Activated CD4-positive, alpha-beta memory T cell treated with anti-CD3 and anti-CD28 coated beads for 36 hours (primary cell): ENCODE measurements at regions of chr3 and their contacts with region 1.

Region 1: GRCh38 chr3:49411968-49412631 is at the starts of genes RHOA and TCTA:
- DNase-seq: peak; percentile 99
- H3K4me3 Mint-ChIP-seq: peak within 1 kb of the TSS; percentile 90
- H3K27ac Mint-ChIP-seq: peak within 1 kb of the TSS; percentile 95
- H3K4me1 Mint-ChIP-seq: peaks cover 63% of the 10 kb centered on the region
- H3K27me3 Mint-ChIP-seq: no peaks in the 10 kb centered on the region
- total RNA-seq, gene RHOA: 497 to 514 TPM
- total RNA-seq, gene TCTA: 9.5 to 10.9 TPM

Region 2: DNA sequence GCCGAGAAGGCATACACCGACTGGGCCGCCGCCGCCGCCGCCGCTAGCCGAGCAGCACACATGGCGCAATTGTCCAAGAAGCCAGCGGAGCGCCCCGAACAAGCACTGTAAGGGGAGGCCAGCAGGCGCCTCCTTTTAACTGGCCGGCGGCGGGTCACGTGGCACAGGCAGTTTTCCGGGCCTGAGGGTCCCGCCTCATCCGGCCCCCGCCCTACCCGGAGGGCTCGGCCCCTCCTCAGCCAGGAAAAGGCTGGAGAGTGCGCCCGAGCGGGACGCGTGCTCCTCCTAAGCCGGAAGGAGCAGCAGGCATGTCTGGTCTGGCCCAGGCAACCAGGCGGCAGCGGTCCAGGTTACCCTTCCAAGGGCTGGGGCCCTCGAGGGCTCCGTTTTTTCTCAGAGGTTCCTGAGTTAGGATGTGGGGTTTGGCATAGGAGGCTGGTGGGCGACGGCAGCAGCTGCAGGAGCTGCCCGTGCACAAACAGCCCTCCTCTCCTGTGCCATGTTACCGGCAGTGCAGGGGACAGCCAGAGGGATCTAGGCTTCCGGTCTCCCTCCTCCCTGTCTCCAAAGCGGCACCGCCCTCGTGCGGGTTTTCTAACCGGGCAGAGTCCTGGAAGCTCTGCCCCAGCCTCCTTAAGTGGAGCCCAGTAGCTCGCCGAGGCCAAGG is 53.8 kb before region 1 on chr3 and contains the start of gene GPX1:
- CTCF ChIA-PET with region 1: no interaction called
- POLR2A ChIA-PET with region 1: interaction called, 14 read pairs
- intact Hi-C with region 1: loop called (anchors 1 kb)
- DNase-seq: peak; percentile 92
- H3K4me3 Mint-ChIP-seq: peak within 1 kb of the TSS; percentile 95
- H3K27ac Mint-ChIP-seq: peak within 1 kb of the TSS; percentile 92
- H3K4me1 Mint-ChIP-seq: peaks cover 22% of the 10 kb centered on the region
- H3K27me3 Mint-ChIP-seq: no peaks in the 10 kb centered on the region
- total RNA-seq, gene GPX1: 176 to 177 TPM

Region 3: DNA sequence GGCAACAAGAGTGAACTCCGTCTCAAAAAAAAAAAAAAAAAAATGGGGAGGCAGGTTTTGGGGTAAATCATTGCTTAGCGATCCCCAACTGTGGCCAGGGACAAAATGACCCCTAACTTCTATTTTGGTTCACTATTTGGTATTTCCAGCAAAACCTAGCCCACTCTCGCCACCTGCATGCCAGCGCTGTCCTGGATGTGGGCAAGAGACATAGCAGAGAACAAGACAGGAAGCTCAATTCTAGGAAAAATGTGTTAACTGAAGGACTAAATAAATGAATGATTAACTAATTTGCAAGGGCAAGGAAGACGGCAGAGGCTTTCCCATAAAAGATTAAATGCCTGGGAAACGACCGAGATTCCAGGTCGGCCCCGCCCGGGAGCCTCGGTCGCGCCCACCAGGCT is 16.6 kb after region 1 on chr3:
- CTCF ChIA-PET with region 1: interaction called, 9 read pairs
- POLR2A ChIA-PET with region 1: interaction called, 11 read pairs
- intact Hi-C with region 1: loop called (anchors 1 kb)
- DNase-seq: no peak
- H3K4me3 Mint-ChIP-seq: peak overlapping the region; percentile 77
- H3K27ac Mint-ChIP-seq: peak overlapping the region; percentile 73
- H3K4me1 Mint-ChIP-seq: peaks cover 14% of the 10 kb centered on the region
- H3K27me3 Mint-ChIP-seq: no peaks in the 10 kb centered on the region

Region 4: DNA sequence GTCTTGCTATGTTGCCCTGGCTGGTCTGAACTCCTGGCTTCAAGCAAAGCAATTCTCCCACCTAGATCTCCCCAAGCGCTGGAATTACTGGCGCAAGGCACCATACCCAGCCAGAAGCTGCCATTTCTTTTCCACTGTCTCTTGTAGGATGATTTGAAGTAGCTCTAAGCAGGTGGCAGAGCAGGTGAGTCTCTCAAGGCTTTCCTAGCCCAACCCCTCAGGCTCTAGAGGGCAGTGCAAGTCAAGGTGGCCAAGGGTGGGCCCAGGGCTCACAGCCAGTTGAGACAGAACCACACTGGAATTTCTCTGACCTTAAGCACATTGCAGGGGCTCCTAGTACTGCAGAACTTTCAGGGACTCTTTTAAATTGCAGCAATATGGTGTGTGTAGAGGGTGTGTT is 42.4 kb after region 1 on chr3:
- CTCF ChIA-PET with region 1: interaction called, 58 read pairs
- POLR2A ChIA-PET with region 1: no interaction called
- intact Hi-C with region 1: loop called (anchors 1 kb)
- DNase-seq: no peak
- H3K4me3 Mint-ChIP-seq: no peak overlapping the region
- H3K27ac Mint-ChIP-seq: no peak overlapping the region
- H3K4me1 Mint-ChIP-seq: no peaks in the 10 kb centered on the region
- H3K27me3 Mint-ChIP-seq: no peaks in the 10 kb centered on the region

Region 5: DNA sequence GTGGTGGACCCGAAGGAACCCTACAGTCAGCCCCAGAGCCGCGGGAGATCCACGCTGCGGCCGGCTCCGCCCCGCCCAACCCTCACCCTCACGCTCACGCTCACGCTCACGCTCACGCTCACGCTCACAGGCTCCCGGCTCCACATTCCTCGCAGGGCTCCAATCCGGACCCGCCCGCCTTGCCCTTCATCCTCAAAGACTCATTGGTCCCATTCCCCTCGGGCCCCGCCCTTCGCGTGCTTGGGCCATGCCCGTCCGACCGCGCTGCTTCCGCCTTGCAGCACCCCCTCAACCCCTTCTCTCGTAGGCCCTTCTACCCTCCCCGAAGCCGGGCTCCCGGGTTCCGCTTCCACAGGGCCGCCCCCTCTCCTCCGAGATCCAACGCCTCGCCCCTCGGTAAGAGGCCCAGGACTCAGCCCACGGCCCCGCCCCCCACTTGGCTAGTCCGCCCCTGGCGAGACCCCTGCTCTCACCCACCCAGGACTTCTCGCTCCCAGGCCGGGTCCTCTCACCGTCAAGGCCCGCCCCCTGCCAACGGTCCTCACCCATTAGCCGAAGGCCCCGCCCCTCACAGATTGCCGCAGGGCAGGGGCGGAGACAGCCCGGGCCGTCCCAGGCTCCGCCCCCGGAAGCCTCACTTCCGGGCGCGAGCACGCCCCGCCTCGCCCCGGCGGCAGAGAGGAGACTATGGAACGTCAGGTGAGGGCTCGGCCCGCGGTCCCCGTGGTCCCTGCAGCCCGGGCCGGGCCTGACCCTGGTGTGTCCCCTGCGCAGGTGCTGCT is 261.8 kb after region 1 on chr3 and contains the start of gene APEH:
- CTCF ChIA-PET with region 1: interaction called, 8 read pairs
- POLR2A ChIA-PET with region 1: no interaction called
- intact Hi-C with region 1: loop called (anchors 5 kb)
- DNase-seq: peak; percentile 99
- H3K4me3 Mint-ChIP-seq: peak within 1 kb of the TSS; percentile 93
- H3K27ac Mint-ChIP-seq: peak within 1 kb of the TSS; percentile 97
- H3K4me1 Mint-ChIP-seq: peaks cover 32% of the 10 kb centered on the region
- H3K27me3 Mint-ChIP-seq: no peaks in the 10 kb centered on the region
- total RNA-seq, gene APEH: 141 to 143 TPM

Region 6: DNA sequence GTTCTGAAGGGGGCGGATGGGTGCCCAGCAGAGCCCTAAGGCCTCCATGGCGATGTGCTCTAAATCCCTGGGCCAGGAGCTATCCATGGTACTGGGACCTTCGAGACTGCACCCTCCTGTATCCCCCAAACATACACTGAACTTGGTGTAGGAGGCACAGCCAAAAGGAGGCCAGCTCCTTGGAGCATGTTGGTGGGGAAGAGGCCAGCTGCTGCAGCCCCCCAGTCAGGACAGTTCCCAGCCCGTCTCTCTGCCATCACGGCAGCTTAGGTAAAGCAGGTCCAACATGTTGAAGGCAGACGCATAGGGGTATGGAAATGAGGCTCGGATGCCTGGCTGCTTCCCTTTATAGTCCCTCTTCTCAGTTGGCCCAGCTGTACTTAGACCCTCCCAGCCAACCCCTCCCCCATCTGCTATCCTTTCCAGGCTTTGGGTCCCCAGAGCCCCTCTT is 455.8 kb after region 1 on chr3:
- CTCF ChIA-PET with region 1: no interaction called
- POLR2A ChIA-PET with region 1: no interaction called
- intact Hi-C with region 1: no loop called
- DNase-seq: peak; percentile 40
- H3K4me3 Mint-ChIP-seq: no peak overlapping the region
- H3K27ac Mint-ChIP-seq: no peak overlapping the region
- H3K4me1 Mint-ChIP-seq: peaks cover 5% of the 10 kb centered on the region
- H3K27me3 Mint-ChIP-seq: peaks cover 23% of the 10 kb centered on the region